ENCODE measurements at regions of chr9 and their contacts with region 1.

Region 1: DNA sequence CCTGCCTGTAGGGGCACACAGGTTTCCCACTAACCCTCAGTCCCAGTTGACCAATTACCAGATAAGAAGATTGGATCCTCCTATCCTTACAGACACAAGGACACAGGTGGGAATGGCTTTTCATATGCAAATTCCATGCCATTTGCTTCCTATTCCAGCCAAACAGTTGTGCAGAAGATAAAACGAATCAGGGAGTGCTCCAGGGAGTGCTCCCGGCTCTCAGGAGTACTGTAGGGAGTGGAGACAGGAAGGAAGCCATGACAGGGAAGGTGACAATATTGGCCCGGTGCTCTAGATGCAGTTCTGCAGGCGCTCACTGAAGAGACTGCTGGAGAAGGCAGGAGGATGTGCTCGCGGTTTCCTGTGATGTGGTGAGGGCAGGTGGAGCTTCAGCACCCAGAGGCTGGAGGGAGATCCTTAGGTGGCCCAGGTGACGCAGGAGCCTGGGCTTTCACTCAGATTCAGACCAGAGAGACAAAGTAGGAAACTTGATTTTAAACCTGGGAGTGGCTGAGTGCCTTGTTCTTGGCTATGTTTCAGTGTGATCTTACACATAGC is 260.0 kb downstream of the AUH start:
- ATAC-seq: no peak
- H3K4me3 ChIP-seq: no peak overlapping the region
- H3K27ac ChIP-seq: no peak overlapping the region
- H3K4me1 ChIP-seq: peaks cover 0 to 4% of the 10 kb centered on the region in 2 donors

Region 2: GRCh38 chr9:91164724-91165520 is 63.2 kb after region 1 on chr9:
- in situ Hi-C with region 1: loop called in 1 of 9 experiments (anchors 10 kb)
- ATAC-seq: peak; percentile 88 to 99 (median 96)
- H3K4me3 ChIP-seq: no peak overlapping the region
- H3K27ac ChIP-seq: no peak overlapping the region
- H3K4me1 ChIP-seq: peaks cover 0 to 8% of the 10 kb centered on the region in 2 donors

Measured in motor neuron (in vitro differentiated cells).